ENCODE measurements at regions of chr16 and their contacts with region 1.

Region 1: DNA sequence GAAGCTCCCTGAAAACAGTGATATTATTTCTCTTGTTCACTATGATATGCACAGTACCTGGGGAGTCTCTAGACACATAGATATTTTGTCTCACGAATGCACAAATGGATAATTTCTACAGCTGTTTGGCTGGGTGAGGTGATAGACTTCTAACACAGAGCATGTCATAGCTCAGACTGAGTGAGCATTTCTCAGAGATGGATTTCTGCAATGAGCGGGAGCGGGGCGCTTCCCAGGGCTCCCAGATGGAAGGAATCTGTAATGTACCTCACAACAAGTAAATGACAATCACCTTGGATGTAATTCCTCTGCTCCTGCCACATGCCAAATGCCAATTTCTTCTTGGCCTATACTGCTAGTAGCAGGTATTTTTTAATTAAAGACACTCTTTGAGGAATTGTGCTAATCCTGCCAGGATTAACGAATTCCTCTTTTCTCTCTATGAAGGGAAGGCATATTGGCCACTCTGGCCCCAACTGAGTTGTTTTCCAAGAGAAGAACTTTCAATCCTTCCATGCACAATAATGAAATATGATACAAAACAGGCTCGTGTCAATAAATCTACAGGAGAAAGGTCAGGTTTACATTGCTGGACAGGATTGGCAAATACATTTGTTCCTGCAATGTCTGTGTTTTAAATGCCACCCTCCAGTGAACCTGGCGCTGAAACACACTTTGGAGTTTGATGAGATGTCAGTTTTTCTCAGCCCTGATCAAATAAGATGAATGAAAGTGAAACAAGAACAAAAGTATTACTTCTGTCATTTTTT is 185.3 kb downstream of the CBLN1 start:
- DNase-seq: no peak
- ATAC-seq: no peak
- H3K4me3 ChIP-seq: no peak overlapping the region
- H3K27ac ChIP-seq: no peak overlapping the region
- H3K4me1 ChIP-seq: peaks cover 0 to 12% (median 0%) of the 10 kb centered on the region in 9 donors
- H3K27me3 ChIP-seq: no peaks in the 10 kb centered on the region
- CTCF ChIP-seq: no peak

Region 2: GRCh38 chr16:50593410-50594150 is 1497.2 kb after region 1 on chr16:
- intact Hi-C with region 1: loop called in 1 of 10 experiments (anchors 5 kb)
- DNase-seq: no peak
- ATAC-seq: no peak
- H3K4me3 ChIP-seq: no peak overlapping the region
- H3K27ac ChIP-seq: no peak overlapping the region
- H3K4me1 ChIP-seq: peaks cover 0 to 28% (median 10%) of the 10 kb centered on the region in 9 donors
- H3K27me3 ChIP-seq: no peaks in the 10 kb centered on the region
- CTCF ChIP-seq: peak in 7 of 9 donors; percentile 25 to 54 (median 41)

Measured in heart right ventricle (tissue), 16 donors.